Caco-2 (cell line): ENCODE measurements at regions of chr15 and their contacts with region 1.

Region 1: GRCh38 chr15:39756806-39757522 is 25.7 kb downstream of the FSIP1 start:
- DNase-seq: peak in 1 of 2 experiments; percentile 58
- H3K4me3 ChIP-seq: no peak overlapping the region
- H3K4me3 Mint-ChIP-seq: no peak overlapping the region
- H3K27ac Mint-ChIP-seq: peak overlapping the region; percentile 45
- H3K4me1 ChIP-seq: peaks cover 7% of the 10 kb centered on the region; the same call in 1 of the 2 replicates
- H3K4me1 Mint-ChIP-seq: peaks cover 24% of the 10 kb centered on the region
- H3K27me3 ChIP-seq: no peaks in the 10 kb centered on the region
- H3K27me3 Mint-ChIP-seq: no peaks in the 10 kb centered on the region
- CTCF ChIP-seq: peak; percentile 56 to 74

Region 2: DNA sequence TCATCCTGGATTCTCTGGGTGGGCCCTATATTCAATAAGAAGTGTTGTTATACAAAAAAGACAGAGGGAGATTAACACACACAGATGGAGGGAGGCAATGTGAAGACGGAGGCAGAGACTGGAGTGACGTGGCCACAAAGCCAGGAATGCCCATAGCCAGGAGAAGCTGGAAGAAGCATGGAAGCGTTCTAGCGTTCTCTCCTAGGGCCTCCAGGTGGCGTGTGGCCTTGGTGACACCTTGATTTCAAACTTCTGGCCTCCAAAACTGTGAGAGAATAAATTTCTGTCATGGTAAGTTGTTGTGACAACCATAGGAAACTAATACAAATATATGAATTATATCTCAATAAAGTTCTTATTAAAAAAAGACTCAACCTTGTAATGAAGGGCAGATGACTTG is 154.8 kb before region 1 on chr15:
- CTCF ChIA-PET with region 1: interaction called, 8 read pairs
- POLR2A ChIA-PET with region 1: interaction called, 3 read pairs
- intact Hi-C with region 1: loop called (anchors 2 kb)
- DNase-seq: peak in 1 of 2 experiments; percentile 47
- H3K4me3 ChIP-seq: no peak overlapping the region
- H3K4me3 Mint-ChIP-seq: no peak overlapping the region
- H3K27ac Mint-ChIP-seq: no peak overlapping the region
- H3K4me1 ChIP-seq: peaks cover 8% of the 10 kb centered on the region; the same call in 1 of the 2 replicates
- H3K4me1 Mint-ChIP-seq: peaks cover 18% of the 10 kb centered on the region
- H3K27me3 ChIP-seq: no peaks in the 10 kb centered on the region
- H3K27me3 Mint-ChIP-seq: no peaks in the 10 kb centered on the region
- CTCF ChIP-seq: peak; percentile 32 to 45

Region 3: DNA sequence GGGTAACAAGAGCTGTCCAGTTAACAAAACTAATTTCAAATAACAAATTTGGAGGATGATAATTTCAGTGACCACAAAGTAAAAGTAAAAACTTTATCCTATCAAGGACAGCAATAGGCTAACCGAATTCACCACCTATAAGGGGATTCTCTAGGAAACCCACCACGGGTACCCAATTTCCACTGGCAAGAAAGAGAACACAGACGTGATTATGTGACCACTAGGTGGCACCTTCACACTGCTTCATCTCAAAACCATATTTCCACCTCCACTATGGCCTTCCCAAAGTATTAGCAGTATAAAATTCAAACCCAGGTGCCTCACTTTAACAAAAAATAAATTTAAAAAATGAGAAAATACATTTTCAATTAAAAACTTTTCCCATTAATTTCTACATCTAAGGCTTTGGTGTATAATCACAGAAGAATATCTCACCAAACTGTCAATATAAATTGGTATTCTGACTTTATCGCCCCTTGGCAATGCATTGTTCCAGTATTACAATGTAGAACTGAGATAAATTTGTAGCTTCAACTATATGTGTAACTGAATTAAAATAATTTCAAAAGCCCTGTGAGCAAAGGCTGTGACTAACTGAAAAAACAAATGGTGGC is 70.9 kb before region 1 on chr15:
- CTCF ChIA-PET with region 1: interaction called, 52 read pairs
- POLR2A ChIA-PET with region 1: no interaction called
- intact Hi-C with region 1: loop called (anchors 1 kb)
- DNase-seq: peak; percentile 47 to 65
- H3K4me3 ChIP-seq: no peak overlapping the region
- H3K4me3 Mint-ChIP-seq: no peak overlapping the region
- H3K27ac Mint-ChIP-seq: no peak overlapping the region
- H3K4me1 ChIP-seq: peaks cover 45% of the 10 kb centered on the region
- H3K4me1 Mint-ChIP-seq: peaks cover 38% of the 10 kb centered on the region
- H3K27me3 ChIP-seq: no peaks in the 10 kb centered on the region
- H3K27me3 Mint-ChIP-seq: no peaks in the 10 kb centered on the region
- CTCF ChIP-seq: peak; percentile 52 to 78

Region 4: DNA sequence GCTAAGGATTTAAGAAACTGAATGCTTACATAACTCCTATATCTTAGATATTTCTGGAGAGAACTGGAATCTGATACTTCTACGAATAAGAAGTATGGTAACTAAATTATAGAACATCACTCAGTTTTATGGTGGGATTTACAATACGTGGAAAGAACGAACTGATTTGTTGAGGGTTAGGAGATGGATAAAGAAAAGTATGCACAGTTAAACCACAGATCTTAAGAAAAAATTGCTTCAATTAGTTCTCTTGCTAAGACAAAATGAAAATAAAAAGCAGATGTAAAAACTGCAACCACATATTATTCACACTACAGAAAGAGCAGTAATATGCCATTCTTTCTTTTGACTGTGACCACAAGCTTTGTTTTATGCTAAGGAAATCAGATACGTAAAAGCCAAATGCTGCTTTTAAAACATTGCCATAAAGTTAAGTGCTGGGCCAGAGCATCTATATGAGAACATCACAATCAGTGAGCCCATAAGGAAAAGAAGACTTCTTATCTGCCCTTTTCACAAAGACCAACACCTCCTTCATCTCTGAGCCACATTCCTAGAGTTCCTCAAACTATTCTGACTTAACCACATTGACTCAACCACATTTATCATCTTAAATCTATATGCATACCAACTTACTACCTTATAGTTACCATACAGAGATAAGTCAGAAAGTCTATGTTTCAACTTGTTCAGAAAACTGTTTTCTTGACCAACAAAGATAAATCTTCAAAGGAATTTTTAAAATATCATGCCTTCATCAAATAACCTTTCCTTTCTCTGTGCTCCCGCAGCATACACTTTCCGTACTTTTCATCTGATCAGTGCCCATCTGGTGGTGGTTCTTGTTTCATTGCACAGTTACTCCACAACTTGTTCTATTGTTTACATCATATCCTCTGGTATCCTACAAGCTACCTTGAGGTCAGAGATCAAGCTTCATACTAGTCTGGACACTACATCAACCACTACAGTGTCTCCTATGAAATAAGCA is 36.0 kb before region 1 on chr15:
- CTCF ChIA-PET with region 1: interaction called, 12 read pairs
- POLR2A ChIA-PET with region 1: no interaction called
- intact Hi-C with region 1: loop called (anchors 1 kb)
- DNase-seq: peak; percentile 83 to 87
- H3K4me3 ChIP-seq: no peak overlapping the region
- H3K4me3 Mint-ChIP-seq: no peak overlapping the region
- H3K27ac Mint-ChIP-seq: peak overlapping the region; percentile 94
- H3K4me1 ChIP-seq: peaks cover 61% of the 10 kb centered on the region
- H3K4me1 Mint-ChIP-seq: peaks cover 39% of the 10 kb centered on the region
- H3K27me3 ChIP-seq: no peaks in the 10 kb centered on the region
- H3K27me3 Mint-ChIP-seq: no peaks in the 10 kb centered on the region
- CTCF ChIP-seq: peak in 1 of 2 experiments; percentile 16

Region 5: DNA sequence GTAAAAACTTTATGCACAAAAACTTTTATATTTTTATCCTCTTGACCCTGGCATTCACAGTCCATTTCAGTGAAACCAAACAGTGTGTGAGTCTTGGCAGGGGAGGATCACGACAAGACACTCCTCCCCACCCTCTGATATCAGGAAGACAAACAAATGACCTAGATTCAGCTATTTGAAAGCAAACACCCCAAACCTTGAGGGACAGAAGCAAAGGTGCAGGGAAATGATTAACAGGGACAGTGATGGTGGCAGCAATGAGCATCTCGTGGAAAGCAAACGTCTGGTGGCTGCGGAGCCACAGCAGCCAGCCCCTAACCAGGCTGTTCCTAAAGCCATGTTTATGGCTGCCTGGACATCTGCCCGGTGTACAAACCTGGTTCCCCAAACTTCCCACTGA is 26.4 kb before region 1 on chr15:
- CTCF ChIA-PET with region 1: no interaction called
- POLR2A ChIA-PET with region 1: no interaction called
- intact Hi-C with region 1: loop called (anchors 1 kb)
- DNase-seq: peak; percentile 82 to 83
- H3K4me3 ChIP-seq: no peak overlapping the region
- H3K4me3 Mint-ChIP-seq: peak overlapping the region; percentile 17
- H3K27ac Mint-ChIP-seq: peak overlapping the region; percentile 73
- H3K4me1 ChIP-seq: peaks cover 78% of the 10 kb centered on the region
- H3K4me1 Mint-ChIP-seq: peaks cover 29% of the 10 kb centered on the region
- H3K27me3 ChIP-seq: no peaks in the 10 kb centered on the region
- H3K27me3 Mint-ChIP-seq: no peaks in the 10 kb centered on the region
- CTCF ChIP-seq: no peak